Activated naive CD4-positive, alpha-beta T cell treated with anti-CD3 and anti-CD28 coated beads, Interleukin-2, amount 10 ng/mL, durations not matched to agents 7 days and 5 days (primary cell): ENCODE measurements at regions of chr5 and their contacts with region 1.

Region 1: GRCh38 chr5:36264202-36264760 is 22.6 kb upstream of the NADK2 start:
- DNase-seq: no peak
- H3K4me3 Mint-ChIP-seq: no peak overlapping the region
- H3K27ac Mint-ChIP-seq: no peak overlapping the region
- H3K4me1 Mint-ChIP-seq: no peaks in the 10 kb centered on the region
- H3K27me3 Mint-ChIP-seq: peaks cover 30% of the 10 kb centered on the region

Region 2: DNA sequence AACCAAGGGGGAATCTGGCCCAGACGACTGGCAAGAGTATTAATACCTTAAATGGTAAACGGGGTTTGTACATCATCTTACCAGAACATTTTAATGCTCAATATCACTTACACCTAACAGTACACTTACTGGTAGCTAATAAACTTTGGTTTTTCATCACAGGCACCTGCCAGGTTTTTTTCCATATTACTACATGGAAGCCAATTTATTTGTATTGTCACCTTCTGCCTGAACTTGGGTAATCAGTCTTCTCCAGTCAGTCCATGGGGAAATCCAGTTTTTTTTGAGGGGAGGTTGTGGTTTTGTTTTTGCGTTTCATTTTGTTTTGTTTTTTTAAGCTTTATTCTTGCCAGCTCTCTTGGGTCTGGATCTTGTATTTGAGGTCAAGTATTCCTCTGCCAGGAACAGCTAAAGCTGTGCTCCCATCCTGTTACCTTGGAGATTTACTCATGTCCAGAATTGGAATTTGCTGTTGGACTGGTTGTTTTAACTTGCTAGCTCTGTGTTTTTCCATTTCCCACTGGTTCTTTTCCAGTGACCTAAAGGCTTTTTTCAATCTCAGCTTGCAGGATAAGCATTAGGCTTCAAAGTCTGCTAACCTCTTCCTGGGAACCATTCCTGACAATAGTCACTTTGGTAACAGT is 11.4 kb before region 1 on chr5:
- CTCF ChIA-PET with region 1: interaction called, 17 read pairs
- DNase-seq: no peak
- H3K4me3 Mint-ChIP-seq: no peak overlapping the region
- H3K27ac Mint-ChIP-seq: no peak overlapping the region
- H3K4me1 Mint-ChIP-seq: no peaks in the 10 kb centered on the region
- H3K27me3 Mint-ChIP-seq: peaks cover 6% of the 10 kb centered on the region

Region 3: GRCh38 chr5:36279054-36279698 is 14.9 kb after region 1 on chr5:
- CTCF ChIA-PET with region 1: interaction called, 16 read pairs
- DNase-seq: no peak
- H3K4me3 Mint-ChIP-seq: no peak overlapping the region
- H3K27ac Mint-ChIP-seq: no peak overlapping the region
- H3K4me1 Mint-ChIP-seq: no peaks in the 10 kb centered on the region
- H3K27me3 Mint-ChIP-seq: peaks cover 12% of the 10 kb centered on the region

Region 4: DNA sequence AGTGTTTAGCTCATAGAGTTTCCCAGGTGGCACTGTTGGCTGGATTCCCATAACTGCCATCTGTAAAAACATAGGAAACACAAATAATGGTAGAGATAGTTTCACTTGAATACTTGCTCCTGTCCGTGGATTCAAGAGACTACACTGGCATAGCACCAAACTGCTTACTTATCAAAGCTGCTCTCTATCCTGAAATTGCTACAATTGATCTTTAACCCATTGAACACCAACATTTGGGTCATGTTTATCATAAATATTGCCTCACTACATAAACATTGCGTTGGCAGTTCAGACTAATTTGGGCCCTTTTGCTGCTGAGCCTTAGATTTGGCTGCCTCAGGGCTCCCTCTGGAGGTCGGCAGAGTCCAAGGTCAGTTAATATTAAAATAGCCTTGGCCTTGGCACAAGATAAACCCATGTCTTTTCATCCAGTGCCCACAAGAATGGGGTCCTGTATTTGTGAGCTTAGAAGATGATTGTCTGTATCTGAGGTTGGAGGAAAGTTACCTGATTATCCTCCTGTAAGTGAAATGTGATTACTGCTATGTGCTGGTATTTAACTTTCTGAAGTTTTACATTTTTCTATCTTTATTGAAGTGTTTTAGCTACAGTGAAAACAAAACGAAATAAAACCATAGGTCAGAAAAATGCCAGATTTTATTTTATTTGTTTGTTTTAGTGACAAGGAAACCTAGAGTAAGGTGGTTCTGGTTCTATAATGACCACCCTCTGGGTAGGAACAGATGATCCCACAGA is 41.5 kb after region 1 on chr5:
- CTCF ChIA-PET with region 1: interaction called, 12 read pairs
- DNase-seq: peak; percentile 39
- H3K4me3 Mint-ChIP-seq: no peak overlapping the region
- H3K27ac Mint-ChIP-seq: no peak overlapping the region
- H3K4me1 Mint-ChIP-seq: no peaks in the 10 kb centered on the region
- H3K27me3 Mint-ChIP-seq: peaks cover 8% of the 10 kb centered on the region